ENCODE measurements at regions of chr15 and their contacts with region 1.

Region 1: DNA sequence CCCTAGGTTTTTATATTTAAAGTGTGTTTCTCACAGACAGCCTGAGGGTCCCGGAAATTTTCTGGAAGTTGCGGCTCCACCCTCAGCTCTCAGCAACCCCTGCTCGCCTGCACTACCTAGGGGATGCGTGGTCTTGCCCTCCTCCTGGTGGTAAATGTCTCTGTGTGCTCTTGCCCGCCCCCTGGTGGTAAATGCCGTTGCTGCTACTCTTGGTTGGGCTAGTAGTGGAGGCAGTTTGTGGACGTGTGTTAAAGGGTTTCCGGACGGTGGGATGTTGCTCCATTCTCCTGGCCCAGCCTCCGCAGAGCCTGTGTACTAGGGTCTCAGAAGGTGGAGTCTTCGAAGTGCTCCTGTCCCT is 27.4 kb downstream of the STOML1 start:
- DNase-seq: peak; percentile 91
- ATAC-seq: peak; percentile 95

Region 2: GRCh38 chr15:74053941-74054529 is 89.3 kb after region 1 on chr15:
- intact Hi-C with region 1: loop called (anchors 5 kb)
- DNase-seq: peak; percentile 80
- ATAC-seq: peak; percentile 85